ENCODE measurements at regions of chr14 and their contacts with region 1.

Region 1: DNA sequence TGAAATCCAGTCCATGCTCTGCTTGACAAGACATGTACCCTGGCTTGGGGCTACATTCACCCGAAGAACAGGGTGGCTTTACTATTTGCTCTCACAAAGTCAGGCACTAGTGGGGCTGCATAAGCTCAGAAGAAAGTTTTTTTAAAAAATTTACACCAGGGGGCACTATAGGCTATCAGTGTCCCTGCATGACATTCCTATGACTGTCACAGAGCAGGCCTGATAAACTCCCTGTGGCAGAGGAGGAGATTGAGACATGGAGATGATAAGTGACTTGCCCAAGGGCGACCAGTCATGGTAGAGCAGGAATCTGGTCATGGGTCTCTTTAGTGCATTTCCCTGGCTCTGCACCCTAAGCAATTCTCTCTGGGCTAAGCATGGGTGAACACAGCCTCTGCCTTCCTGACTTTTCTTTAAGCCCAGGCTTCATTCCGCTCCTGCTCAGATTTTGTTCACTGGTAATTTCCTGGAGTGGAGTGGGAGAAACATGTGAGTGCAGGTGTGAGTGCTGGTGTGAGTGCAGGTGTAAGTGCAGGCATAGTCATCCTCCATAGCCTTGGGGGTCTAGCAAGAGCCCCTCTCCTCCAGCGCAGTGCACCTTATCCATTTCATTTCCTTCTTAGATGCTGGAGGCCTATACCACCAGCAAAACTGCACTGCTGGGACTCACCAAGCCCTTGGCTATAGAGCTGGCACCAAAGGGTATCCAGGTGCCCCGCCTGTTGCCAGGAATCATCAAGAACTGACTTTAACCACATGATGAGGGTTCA is 91.6 kb downstream of the DHRS2 start:
- DNase-seq: peak; percentile 29 to 86
- H3K4me3 ChIP-seq: no peak overlapping the region
- H3K27ac ChIP-seq: peak overlapping the region; percentile 100
- H3K4me1 ChIP-seq: peaks cover 54% of the 10 kb centered on the region
- H3K27me3 ChIP-seq: no peaks in the 10 kb centered on the region
- CTCF ChIP-seq: peak; percentile 64

Region 2: GRCh38 chr14:23631702-23632460 is 95.9 kb before region 1 on chr14:
- CTCF ChIA-PET with region 1: interaction called, 11 read pairs
- POLR2A ChIA-PET with region 1: interaction called, 5 read pairs
- intact Hi-C with region 1: loop called (anchors 2 kb)
- DNase-seq: peak; percentile 37 to 70
- H3K4me3 ChIP-seq: no peak overlapping the region
- H3K27ac ChIP-seq: no peak overlapping the region
- H3K4me1 ChIP-seq: peaks cover 8% of the 10 kb centered on the region
- H3K27me3 ChIP-seq: no peaks in the 10 kb centered on the region
- CTCF ChIP-seq: peak; percentile 89

Region 3: GRCh38 chr14:23665375-23666192 is 62.2 kb before region 1 on chr14:
- CTCF ChIA-PET with region 1: interaction called, 4 read pairs
- POLR2A ChIA-PET with region 1: no interaction called
- intact Hi-C with region 1: loop called (anchors 2 kb)
- DNase-seq: peak; percentile 37 to 73
- H3K4me3 ChIP-seq: no peak overlapping the region
- H3K27ac ChIP-seq: peak overlapping the region; percentile 63
- H3K4me1 ChIP-seq: peaks cover 31% of the 10 kb centered on the region
- H3K27me3 ChIP-seq: no peaks in the 10 kb centered on the region
- CTCF ChIP-seq: peak; percentile 66

Region 4: DNA sequence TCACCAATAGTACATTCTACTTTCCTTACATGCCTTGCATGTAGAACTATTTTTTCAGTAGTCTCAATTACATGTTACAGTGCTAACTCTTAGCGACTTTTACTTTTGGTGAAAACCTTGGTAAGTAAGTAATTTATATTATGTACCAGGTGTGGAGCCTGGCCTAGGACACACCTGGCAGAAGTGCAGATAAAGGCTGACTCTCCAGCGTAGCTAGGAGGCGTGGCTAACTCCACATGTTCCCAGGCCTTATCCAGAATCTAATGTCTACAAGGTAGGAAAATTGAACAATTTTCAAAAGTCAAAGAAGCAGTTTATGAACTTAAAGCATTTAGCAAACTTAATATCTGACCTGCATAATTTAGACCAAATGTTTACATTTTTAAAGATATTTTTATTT is 65.8 kb after region 1 on chr14:
- CTCF ChIA-PET with region 1: no interaction called
- POLR2A ChIA-PET with region 1: no interaction called
- intact Hi-C with region 1: no loop called
- DNase-seq: no peak
- H3K4me3 ChIP-seq: no peak overlapping the region
- H3K27ac ChIP-seq: no peak overlapping the region
- H3K4me1 ChIP-seq: no peaks in the 10 kb centered on the region
- H3K27me3 ChIP-seq: no peaks in the 10 kb centered on the region
- CTCF ChIP-seq: no peak

Region 5: GRCh38 chr14:23910101-23910875 is 182.5 kb after region 1 on chr14:
- CTCF ChIA-PET with region 1: interaction called, 6 read pairs
- POLR2A ChIA-PET with region 1: no interaction called
- intact Hi-C with region 1: loop called (anchors 1 kb)
- DNase-seq: peak in 1 of 2 experiments; percentile 56
- H3K4me3 ChIP-seq: no peak overlapping the region
- H3K27ac ChIP-seq: no peak overlapping the region
- H3K4me1 ChIP-seq: no peaks in the 10 kb centered on the region
- H3K27me3 ChIP-seq: no peaks in the 10 kb centered on the region
- CTCF ChIP-seq: peak; percentile 78

Region 6: GRCh38 chr14:23953464-23954278 is 225.9 kb after region 1 on chr14 and contains the start of gene DHRS4:
- CTCF ChIA-PET with region 1: no interaction called
- POLR2A ChIA-PET with region 1: no interaction called
- intact Hi-C with region 1: loop called (anchors 1 kb)
- DNase-seq: peak; percentile 64 to 78
- H3K4me3 ChIP-seq: peak within 1 kb of the TSS; percentile 78
- H3K27ac ChIP-seq: peak within 1 kb of the TSS; percentile 70
- H3K4me1 ChIP-seq: no peaks in the 10 kb centered on the region; the same call in 1 of the 2 replicates
- H3K27me3 ChIP-seq: no peaks in the 10 kb centered on the region
- CTCF ChIP-seq: peak; percentile 90
- total RNA-seq, gene DHRS4: 17.6 and 24.1 TPM in 2 replicates

Measured in PC-9 (cell line).